Tibial artery (tissue), 4 donors: ENCODE measurements at regions of chr6 and their contacts with region 1.

Region 1: GRCh38 chr6:149431905-149432775 is 32.1 kb downstream of the SUMO4 start:
- DNase-seq: peak; percentile 92 to 95
- H3K4me3 ChIP-seq: no peak overlapping the region
- H3K27ac ChIP-seq: no peak overlapping the region
- H3K4me1 ChIP-seq: peaks cover 0 to 8% (median 3%) of the 10 kb centered on the region in 4 donors
- H3K27me3 ChIP-seq: peaks cover 0 to 33% of the 10 kb centered on the region in 2 donors
- CTCF ChIP-seq: peak; percentile 93

Region 2: DNA sequence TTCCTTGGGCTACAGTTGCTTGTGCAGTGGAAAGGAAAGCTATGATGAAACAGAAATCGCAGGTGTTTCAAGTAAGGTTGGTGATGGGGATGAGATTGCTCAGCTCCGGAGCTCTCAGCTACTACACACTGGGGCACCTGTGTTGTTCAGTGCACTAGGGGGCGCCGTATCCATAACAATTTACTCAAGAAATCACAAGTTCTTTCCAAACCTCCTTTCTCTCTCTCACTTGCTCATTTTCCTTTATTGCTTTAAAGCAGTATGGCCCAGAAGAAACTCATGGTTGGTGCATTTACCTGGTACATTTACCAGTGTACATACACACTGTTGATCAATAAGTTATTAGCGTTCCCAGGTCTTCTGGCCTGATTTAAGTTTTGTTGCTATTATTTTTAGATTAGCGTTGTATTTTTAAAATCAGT is 349.8 kb before region 1 on chr6:
- intact Hi-C with region 1: loop called (anchors 5 kb)
- DNase-seq: peak; percentile 80 to 83
- H3K4me3 ChIP-seq: no peak overlapping the region
- H3K27ac ChIP-seq: no peak overlapping the region
- H3K4me1 ChIP-seq: peaks cover 0 to 22% (median 10%) of the 10 kb centered on the region in 4 donors
- H3K27me3 ChIP-seq: peaks cover 0 to 5% of the 10 kb centered on the region in 2 donors
- CTCF ChIP-seq: peak; percentile 62 to 70

Region 3: GRCh38 chr6:149513915-149514314 is 81.8 kb after region 1 on chr6:
- intact Hi-C with region 1: loop called (anchors 5 kb)
- DNase-seq: no peak
- H3K4me3 ChIP-seq: no peak overlapping the region
- H3K27ac ChIP-seq: no peak overlapping the region
- H3K4me1 ChIP-seq: no peaks in the 10 kb centered on the region
- H3K27me3 ChIP-seq: no peaks in the 10 kb centered on the region
- CTCF ChIP-seq: no peak